CD8-positive, alpha-beta T cell (primary cell): ENCODE measurements at regions of chr5 and their contacts with region 1.

Region 1: GRCh38 chr5:23482642-23483041 is 24.8 kb upstream of the PRDM9 start:
- DNase-seq: no peak
- ATAC-seq: no peak
- H3K4me3 ChIP-seq: no peak overlapping the region
- H3K4me3 Mint-ChIP-seq: no peak overlapping the region
- H3K27ac ChIP-seq: no peak overlapping the region
- H3K27ac Mint-ChIP-seq: no peak overlapping the region
- H3K4me1 ChIP-seq: no peaks in the 10 kb centered on the region
- H3K4me1 Mint-ChIP-seq: no peaks in the 10 kb centered on the region
- H3K27me3 ChIP-seq: no peaks in the 10 kb centered on the region
- H3K27me3 Mint-ChIP-seq: no peaks in the 10 kb centered on the region
- CTCF ChIP-seq: no peak

Region 2: GRCh38 chr5:23466401-23466912 is 16.2 kb before region 1 on chr5:
- CTCF ChIA-PET with region 1: no interaction called
- POLR2A ChIA-PET with region 1: no interaction called
- intact Hi-C with region 1: loop called in 1 of 2 experiments (anchors 1 kb)
- DNase-seq: no peak
- ATAC-seq: no peak
- H3K4me3 ChIP-seq: no peak overlapping the region
- H3K4me3 Mint-ChIP-seq: no peak overlapping the region
- H3K27ac ChIP-seq: no peak overlapping the region
- H3K27ac Mint-ChIP-seq: no peak overlapping the region
- H3K4me1 ChIP-seq: no peaks in the 10 kb centered on the region
- H3K4me1 Mint-ChIP-seq: no peaks in the 10 kb centered on the region
- H3K27me3 ChIP-seq: no peaks in the 10 kb centered on the region
- H3K27me3 Mint-ChIP-seq: no peaks in the 10 kb centered on the region
- CTCF ChIP-seq: no peak

Region 3: DNA sequence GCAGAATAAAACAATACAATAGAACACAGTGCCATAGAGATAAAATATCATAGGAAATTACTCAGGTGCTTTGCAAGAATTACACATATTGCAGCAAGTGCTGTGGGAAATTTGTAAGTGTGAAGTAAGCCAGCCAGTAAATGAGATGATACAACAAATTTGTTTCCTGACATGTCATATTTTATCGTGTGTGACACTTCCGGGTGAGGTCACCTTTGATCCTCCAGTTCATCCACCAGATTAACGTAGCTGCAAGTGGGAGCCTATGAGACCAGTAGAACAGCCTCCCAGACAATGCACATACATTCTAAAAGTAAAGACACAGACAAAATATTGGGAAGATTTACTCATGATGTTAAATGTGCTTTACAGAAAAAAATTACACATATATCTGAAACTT is 96.9 kb after region 1 on chr5:
- CTCF ChIA-PET with region 1: no interaction called
- POLR2A ChIA-PET with region 1: no interaction called
- intact Hi-C with region 1: no loop called
- DNase-seq: no peak
- ATAC-seq: no peak
- H3K4me3 ChIP-seq: no peak overlapping the region
- H3K4me3 Mint-ChIP-seq: no peak overlapping the region
- H3K27ac ChIP-seq: no peak overlapping the region
- H3K27ac Mint-ChIP-seq: no peak overlapping the region
- H3K4me1 ChIP-seq: no peaks in the 10 kb centered on the region
- H3K4me1 Mint-ChIP-seq: no peaks in the 10 kb centered on the region
- H3K27me3 ChIP-seq: no peaks in the 10 kb centered on the region
- H3K27me3 Mint-ChIP-seq: no peaks in the 10 kb centered on the region
- CTCF ChIP-seq: no peak